Endothelial cell of umbilical vein (primary cell): ENCODE measurements at regions of chr7 and their contacts with region 1.

Region 1: GRCh38 chr7:151110941-151111645 is 24.8 kb downstream of the AGAP3 start:
- DNase-seq: peak; percentile 65
- H3K4me3 ChIP-seq: no peak overlapping the region
- H3K27ac ChIP-seq: no peak overlapping the region
- H3K4me1 ChIP-seq: peaks cover 19% of the 10 kb centered on the region
- H3K27me3 ChIP-seq: no peaks in the 10 kb centered on the region
- CTCF ChIP-seq: peak; percentile 85 to 91
- POLR2A ChIP-seq: no peak

Region 2: DNA sequence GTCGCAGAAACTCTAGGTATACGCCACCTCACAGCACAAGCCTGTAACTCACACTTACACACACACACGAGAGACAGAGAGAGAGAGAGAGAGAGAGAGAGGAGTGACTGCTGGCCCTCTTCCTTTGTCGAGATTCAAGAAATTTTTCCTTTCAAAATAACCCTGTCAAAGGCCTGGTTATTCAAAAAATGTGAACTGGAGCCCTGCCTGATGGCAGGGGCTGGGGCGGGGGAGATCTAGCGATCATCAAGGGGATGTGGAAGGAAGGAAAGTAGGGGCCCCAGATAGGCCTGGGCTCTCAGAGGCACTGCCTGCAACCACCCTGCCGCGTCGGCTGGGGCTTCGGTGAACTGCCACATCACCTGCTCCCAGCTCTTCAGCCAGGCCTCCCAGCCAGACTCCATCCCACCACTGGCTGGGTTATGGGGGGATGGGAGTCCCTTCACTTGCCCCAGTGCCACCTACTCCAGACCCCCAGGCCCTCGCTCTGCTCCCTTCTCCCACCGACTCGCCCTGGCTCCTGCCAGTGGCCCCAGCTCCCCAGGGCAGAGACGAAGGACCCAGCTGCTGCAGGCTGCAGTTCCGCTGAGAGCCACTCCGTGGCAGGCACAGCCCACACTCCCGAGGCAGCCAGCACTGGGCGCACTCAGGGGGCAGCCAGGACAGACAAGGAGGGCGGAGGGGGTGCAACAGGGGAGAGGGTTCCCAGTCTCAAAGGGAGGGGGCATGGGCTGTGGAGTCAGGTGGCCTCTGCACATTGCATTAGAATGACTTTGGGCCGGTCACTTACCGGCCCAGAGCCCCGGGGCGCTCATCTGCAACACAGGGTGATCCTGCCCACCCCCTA is 148.3 kb before region 1 on chr7:
- CTCF ChIA-PET with region 1: interaction called, 4 read pairs
- POLR2A ChIA-PET with region 1: no interaction called
- dilution Hi-C with region 1: no loop called
- intact Hi-C with region 1: loop called (anchors 2 kb)
- DNase-seq: peak; percentile 36
- H3K4me3 ChIP-seq: no peak overlapping the region
- H3K27ac ChIP-seq: no peak overlapping the region
- H3K4me1 ChIP-seq: no peaks in the 10 kb centered on the region
- H3K27me3 ChIP-seq: peaks cover 17 to 23% of the 10 kb centered on the region in 2 experiments
- CTCF ChIP-seq: peak; percentile 81 to 96
- POLR2A ChIP-seq: no peak

Region 3: DNA sequence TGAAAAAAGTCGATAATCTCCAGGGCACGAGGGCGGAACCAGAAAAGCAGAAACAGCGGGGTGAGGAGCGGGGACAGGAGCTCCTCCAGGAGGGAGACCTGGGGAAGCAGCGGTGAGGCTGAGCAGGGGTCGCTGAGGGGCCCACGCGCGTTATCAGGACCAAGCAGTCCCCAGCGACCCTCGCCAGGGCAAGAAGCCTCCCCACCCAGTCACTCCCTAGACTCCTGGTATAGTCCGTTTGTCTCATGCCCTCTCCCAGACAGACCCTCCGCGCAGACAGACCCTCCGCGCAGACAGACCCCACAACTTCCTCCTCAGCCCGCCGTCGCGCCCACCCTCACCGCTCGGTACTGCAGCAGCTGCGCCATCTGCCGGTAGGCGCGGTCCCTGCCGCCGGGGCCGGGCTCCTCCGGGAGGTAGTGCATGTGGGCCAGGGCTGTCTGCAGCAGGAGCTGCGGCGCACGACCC is 93.1 kb before region 1 on chr7:
- CTCF ChIA-PET with region 1: interaction called, 10 read pairs
- POLR2A ChIA-PET with region 1: no interaction called
- dilution Hi-C with region 1: no loop called
- intact Hi-C with region 1: no loop called
- DNase-seq: peak; percentile 58
- H3K4me3 ChIP-seq: no peak overlapping the region
- H3K27ac ChIP-seq: no peak overlapping the region
- H3K4me1 ChIP-seq: peaks cover 7% of the 10 kb centered on the region
- H3K27me3 ChIP-seq: peaks cover 12 to 14% of the 10 kb centered on the region in 2 experiments
- CTCF ChIP-seq: peak; percentile 98 to 99
- POLR2A ChIP-seq: no peak

Region 4: GRCh38 chr7:151057989-151058780 is 52.9 kb before region 1 on chr7:
- CTCF ChIA-PET with region 1: interaction called, 8 read pairs
- POLR2A ChIA-PET with region 1: no interaction called
- dilution Hi-C with region 1: no loop called
- intact Hi-C with region 1: loop called (anchors 1 kb)
- DNase-seq: peak; percentile 100
- H3K4me3 ChIP-seq: peak overlapping the region in 2 of 3 experiments; percentile 11 to 69
- H3K27ac ChIP-seq: peak overlapping the region; percentile 81
- H3K4me1 ChIP-seq: peaks cover 29% of the 10 kb centered on the region
- H3K27me3 ChIP-seq: no peaks in the 10 kb centered on the region
- CTCF ChIP-seq: no peak
- POLR2A ChIP-seq: peak; percentile 52

Region 5: DNA sequence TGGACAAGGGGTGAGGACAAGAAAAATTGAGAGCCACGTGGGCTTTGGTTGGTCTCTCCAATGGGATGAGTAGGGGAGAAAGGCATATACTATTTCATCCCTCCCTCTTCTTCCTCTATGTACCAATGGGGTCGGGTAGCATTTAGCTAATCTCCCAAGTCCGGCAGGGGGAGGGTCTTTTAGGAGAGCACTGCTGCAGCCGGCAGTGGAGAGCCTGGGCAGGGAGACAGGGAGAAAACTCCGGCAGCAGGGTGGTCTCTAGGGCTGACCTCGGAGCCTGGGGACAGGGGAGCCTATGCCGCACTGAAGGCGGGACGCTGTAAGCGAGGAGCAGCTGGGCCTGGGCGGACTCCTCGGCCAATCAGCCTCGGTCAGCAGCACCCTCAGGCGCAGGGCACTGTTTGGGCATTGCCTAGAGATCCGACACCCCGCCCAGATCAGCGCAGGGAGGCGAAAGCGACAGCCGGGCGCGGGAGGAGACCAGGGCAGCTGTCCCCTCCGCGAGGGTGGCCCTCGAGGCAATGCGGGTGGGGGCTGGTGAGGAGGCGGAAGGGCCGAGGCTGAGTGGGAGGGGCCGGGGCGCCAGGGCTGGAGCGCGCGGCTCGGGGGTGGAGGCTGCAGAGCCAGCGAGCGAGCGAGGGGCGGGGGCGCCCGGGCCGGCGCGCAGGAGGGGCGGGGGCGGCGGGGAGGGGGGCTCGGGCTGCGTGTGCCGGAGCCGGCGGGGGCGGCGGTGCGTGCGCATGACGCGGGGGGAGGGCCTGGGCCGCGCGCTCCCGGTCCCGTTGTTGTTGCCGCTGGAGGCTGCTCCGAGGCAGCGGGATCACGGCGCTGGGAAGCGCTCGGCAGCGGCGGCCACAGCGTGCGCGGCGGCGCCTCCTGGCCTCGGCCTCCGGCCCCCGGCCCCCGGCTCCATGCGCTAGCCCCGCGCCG is 25.1 kb before region 1 on chr7 and contains the start of gene AGAP3:
- CTCF ChIA-PET with region 1: interaction called, 26 read pairs
- POLR2A ChIA-PET with region 1: interaction called, 4 read pairs
- dilution Hi-C with region 1: no loop called
- intact Hi-C with region 1: loop called (anchors 1 kb)
- DNase-seq: peak; percentile 80
- H3K4me3 ChIP-seq: peak within 1 kb of the TSS; percentile 81 to 96 (median 82)
- H3K27ac ChIP-seq: peak within 1 kb of the TSS; percentile 98
- H3K4me1 ChIP-seq: peaks cover 59% of the 10 kb centered on the region
- H3K27me3 ChIP-seq: no peaks in the 10 kb centered on the region
- CTCF ChIP-seq: peak in 1 of 2 donors; percentile 1
- POLR2A ChIP-seq: peak; percentile 89
- total RNA-seq, gene AGAP3: 171 and 173 TPM in 2 replicates